Panc1 (cell line): ENCODE measurements at regions of chr16 and their contacts with region 1.

Region 1: GRCh38 chr16:4059969-4060368 is 56.3 kb downstream of the ADCY9 start:
- DNase-seq: no peak
- ATAC-seq: peak; percentile 40
- H3K4me3 ChIP-seq: no peak overlapping the region
- H3K27ac ChIP-seq: peak overlapping the region; percentile 72
- H3K4me1 ChIP-seq: peaks cover 24% of the 10 kb centered on the region
- H3K27me3 ChIP-seq: no peaks in the 10 kb centered on the region
- CTCF ChIP-seq: no peak

Region 2: GRCh38 chr16:4019371-4019791 is 40.6 kb before region 1 on chr16:
- CTCF ChIA-PET with region 1: no interaction called
- POLR2A ChIA-PET with region 1: interaction called, 6 read pairs
- in situ Hi-C with region 1: no loop called
- intact Hi-C with region 1: loop called (anchors 2 kb)
- DNase-seq: no peak
- ATAC-seq: peak; percentile 60
- H3K4me3 ChIP-seq: peak overlapping the region; percentile 17 to 51
- H3K27ac ChIP-seq: peak overlapping the region; percentile 80
- H3K4me1 ChIP-seq: peaks cover 38% of the 10 kb centered on the region
- H3K27me3 ChIP-seq: no peaks in the 10 kb centered on the region
- CTCF ChIP-seq: no peak

Region 3: DNA sequence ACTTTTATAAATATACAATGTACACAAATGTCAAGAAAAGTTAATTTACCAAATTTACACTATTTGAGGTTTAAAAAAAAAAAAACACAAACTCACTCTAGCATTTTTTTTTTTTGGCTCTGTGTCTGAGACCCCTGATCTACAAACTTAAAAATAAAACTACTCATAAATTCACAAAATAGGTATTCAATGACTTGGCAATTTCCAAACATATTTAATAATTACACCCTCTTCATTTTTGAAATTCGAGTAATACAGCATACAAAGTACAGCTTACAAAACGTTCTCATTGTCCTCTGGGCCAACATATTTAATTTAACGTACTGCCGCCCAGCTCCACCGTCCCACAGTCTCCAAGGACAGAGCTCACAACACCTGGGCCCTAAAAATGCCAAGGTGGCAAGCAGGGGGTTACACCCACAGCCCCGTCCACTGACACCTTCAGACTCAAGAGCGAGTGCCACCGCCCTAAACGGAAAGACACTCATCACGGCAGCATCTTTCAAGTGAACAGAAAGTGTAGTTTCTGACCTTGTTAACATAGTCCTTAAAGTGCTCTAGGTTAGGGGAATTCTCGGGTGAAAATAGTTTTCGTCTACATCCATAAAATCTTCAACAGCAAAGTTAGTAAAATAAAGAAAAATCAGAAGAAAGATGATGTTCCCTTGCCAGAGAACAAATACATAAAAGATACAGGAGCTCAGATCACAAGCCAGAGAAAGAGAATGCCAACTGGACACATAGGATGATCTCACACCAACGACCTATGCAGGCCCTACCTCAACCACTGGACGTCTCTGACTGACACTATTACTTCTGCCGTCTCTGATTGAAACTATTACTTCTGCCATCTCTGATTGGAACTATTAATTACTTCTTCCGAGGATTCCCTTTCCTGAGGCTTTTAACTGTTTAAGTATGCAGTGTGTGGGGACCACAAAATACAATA is 52.1 kb after region 1 on chr16:
- CTCF ChIA-PET with region 1: no interaction called
- POLR2A ChIA-PET with region 1: no interaction called
- in situ Hi-C with region 1: no loop called
- intact Hi-C with region 1: no loop called
- DNase-seq: no peak
- ATAC-seq: no peak
- H3K4me3 ChIP-seq: peak overlapping the region; percentile 50 to 61
- H3K27ac ChIP-seq: peak overlapping the region; percentile 94
- H3K4me1 ChIP-seq: peaks cover 37% of the 10 kb centered on the region
- H3K27me3 ChIP-seq: no peaks in the 10 kb centered on the region
- CTCF ChIP-seq: no peak